ENCODE measurements at regions of chr12 and their contacts with region 1.

Region 1: DNA sequence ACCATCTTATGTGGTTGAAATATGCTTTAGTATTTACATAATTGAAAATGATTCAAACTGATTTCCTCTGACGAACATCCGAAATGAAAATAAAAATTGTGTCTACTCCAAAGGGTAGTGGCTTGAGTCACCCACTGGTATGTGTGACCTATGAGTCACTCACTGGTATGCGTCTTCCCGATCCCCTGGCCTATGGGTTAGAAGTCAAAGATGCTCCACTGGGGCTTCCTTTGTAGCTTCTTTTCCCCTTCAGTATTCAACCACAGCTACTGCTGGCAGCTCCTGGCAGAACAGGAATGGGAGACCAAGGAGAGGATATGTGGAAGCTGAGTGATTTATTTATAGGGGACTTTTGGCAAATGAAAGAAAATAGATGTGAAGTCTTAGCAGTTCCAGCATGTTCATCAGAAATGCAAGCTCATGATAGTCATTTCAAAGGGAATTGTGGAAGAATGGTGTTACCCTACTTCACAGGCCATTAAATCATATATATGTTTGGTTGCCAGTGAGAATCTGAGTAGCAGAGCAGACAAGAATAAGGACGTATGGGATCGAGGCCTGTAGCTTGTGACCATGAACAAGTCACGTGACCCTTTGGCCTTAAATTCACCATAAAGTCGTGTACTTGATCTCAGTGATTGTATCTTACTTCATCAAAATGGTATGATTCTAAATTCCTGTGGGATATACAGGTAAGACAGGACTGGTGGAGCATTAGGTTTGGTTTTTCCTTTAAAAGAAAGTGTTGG is 108.3 kb downstream of the CRADD start:
- DNase-seq: peak; percentile 37
- H3K4me3 Mint-ChIP-seq: peak overlapping the region; percentile 50
- H3K27ac Mint-ChIP-seq: peak overlapping the region; percentile 92
- H3K4me1 Mint-ChIP-seq: peaks cover 55% of the 10 kb centered on the region
- H3K27me3 Mint-ChIP-seq: no peaks in the 10 kb centered on the region

Region 2: GRCh38 chr12:93287149-93287548 is 498.3 kb before region 1 on chr12:
- intact Hi-C with region 1: no loop called
- DNase-seq: no peak
- H3K4me3 Mint-ChIP-seq: no peak overlapping the region
- H3K27ac Mint-ChIP-seq: no peak overlapping the region
- H3K4me1 Mint-ChIP-seq: no peaks in the 10 kb centered on the region
- H3K27me3 Mint-ChIP-seq: no peaks in the 10 kb centered on the region

Region 3: DNA sequence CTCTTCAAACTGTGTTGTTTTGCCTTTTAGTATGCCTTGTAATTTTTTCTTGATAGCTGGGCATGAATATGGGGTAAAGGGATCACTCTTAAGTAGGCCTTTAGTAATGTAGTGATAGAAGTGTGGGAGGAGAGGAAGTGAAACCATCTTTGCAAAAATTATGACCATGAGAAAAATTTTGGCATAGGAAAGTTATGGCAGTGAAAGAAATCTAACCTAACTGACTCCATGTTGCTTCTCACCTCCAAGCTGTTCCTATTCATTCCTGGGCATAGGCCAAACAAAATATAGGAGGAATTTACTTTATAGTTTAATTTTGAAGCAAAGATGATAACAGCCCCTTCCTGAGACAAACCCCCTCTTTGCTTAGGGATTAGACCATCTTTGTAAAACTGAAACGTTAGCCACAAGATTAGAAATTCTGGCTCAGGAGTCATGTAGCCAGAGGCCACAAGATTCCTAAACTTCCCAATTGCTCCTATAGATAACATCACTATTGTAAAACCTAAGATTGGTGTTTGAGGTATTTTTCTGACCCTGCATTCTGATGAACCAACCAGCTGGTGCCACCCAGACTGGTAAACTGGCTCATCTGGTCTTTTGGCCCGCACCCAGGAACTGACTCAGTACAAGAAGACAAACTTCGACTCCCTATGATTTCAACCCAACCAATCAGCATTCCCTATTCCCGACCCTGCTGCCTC is 62.4 kb before region 1 on chr12:
- intact Hi-C with region 1: no loop called
- DNase-seq: no peak
- H3K4me3 Mint-ChIP-seq: no peak overlapping the region
- H3K27ac Mint-ChIP-seq: no peak overlapping the region
- H3K4me1 Mint-ChIP-seq: peaks cover 5% of the 10 kb centered on the region
- H3K27me3 Mint-ChIP-seq: no peaks in the 10 kb centered on the region

Region 4: DNA sequence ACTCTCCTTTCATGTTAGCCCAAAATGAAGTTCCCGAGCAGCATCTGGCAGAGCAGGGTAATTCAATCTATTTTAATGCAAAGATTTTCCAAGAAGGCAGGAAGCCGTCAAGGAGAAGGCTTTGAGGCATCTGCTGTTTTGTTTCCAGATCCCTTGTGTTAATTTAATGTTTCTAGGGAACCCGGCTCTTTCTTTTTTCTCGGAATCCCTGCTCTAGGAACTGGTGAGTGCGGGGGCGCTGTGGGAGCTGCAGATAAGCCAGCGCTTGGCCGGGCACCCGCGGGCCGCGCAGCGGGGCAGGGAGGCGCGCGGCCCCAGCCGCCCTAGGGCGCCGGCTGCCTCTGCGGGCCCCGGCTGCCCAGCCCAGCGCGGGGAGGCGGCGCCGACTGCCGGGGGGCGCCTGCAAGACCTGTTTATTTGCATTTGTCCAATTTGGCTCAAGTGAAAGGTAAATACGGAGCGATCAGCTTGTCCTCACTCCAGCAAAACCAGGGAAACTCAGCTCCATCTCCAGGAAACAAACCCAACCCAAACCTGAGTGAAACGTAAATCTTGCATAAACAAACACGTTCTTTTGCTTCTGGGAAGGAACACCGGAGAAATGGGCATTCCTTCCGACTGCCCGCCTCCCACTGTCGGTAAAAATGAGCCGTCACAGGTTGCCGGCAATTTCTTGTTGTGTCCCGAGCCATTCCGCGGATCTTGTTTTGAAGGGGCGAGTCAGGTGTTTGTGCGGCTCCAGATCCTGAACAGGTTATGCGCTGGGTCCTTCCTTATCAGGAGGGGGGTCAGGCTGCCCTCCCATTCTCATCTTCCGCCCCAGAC is 43.1 kb before region 1 on chr12:
- intact Hi-C with region 1: loop called (anchors 2 kb)
- DNase-seq: peak; percentile 32
- H3K4me3 Mint-ChIP-seq: peak overlapping the region; percentile 82
- H3K27ac Mint-ChIP-seq: peak overlapping the region; percentile 79
- H3K4me1 Mint-ChIP-seq: peaks cover 30% of the 10 kb centered on the region
- H3K27me3 Mint-ChIP-seq: peaks cover 1% of the 10 kb centered on the region

Region 5: GRCh38 chr12:93847517-93848474 is 62.4 kb after region 1 on chr12:
- intact Hi-C with region 1: loop called (anchors 1 kb)
- DNase-seq: no peak
- H3K4me3 Mint-ChIP-seq: peak overlapping the region; percentile 40
- H3K27ac Mint-ChIP-seq: peak overlapping the region; percentile 81
- H3K4me1 Mint-ChIP-seq: peaks cover 54% of the 10 kb centered on the region
- H3K27me3 Mint-ChIP-seq: no peaks in the 10 kb centered on the region

Region 6: DNA sequence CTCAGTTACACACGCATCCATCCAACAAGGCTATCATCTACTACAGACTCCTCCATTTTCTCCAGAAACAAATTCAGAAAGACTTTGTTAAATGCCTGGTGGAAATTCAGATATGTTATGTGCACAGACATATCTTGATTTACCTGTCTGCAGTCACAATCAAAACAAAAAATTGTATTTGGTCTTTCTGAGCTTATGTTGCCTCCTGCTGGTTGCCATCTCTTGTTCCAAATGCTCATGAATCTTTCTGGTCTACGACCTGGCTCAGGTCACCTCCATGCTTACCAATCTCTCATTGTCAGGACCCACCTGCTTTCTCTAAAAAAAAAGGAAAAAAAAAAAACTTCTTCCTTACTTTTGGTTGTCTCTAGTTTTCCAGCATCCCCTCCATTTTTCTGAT is 193.8 kb after region 1 on chr12:
- intact Hi-C with region 1: loop called (anchors 5 kb)
- DNase-seq: peak; percentile 13
- H3K4me3 Mint-ChIP-seq: no peak overlapping the region
- H3K27ac Mint-ChIP-seq: no peak overlapping the region
- H3K4me1 Mint-ChIP-seq: peaks cover 34% of the 10 kb centered on the region
- H3K27me3 Mint-ChIP-seq: peaks cover 8% of the 10 kb centered on the region